Activated naive CD4-positive, alpha-beta T cell treated with anti-CD3 and anti-CD28 coated beads for 36 hours (primary cell): ENCODE measurements at regions of chr19 and their contacts with region 1.

Region 1: GRCh38 chr19:38079926-38080380 is 144.1 kb downstream of the DPF1 start:
- DNase-seq: peak; percentile 13
- H3K4me3 Mint-ChIP-seq: no peak overlapping the region
- H3K27ac Mint-ChIP-seq: peak overlapping the region; percentile 83
- H3K4me1 Mint-ChIP-seq: peaks cover 21% of the 10 kb centered on the region
- H3K27me3 Mint-ChIP-seq: no peaks in the 10 kb centered on the region

Region 2: DNA sequence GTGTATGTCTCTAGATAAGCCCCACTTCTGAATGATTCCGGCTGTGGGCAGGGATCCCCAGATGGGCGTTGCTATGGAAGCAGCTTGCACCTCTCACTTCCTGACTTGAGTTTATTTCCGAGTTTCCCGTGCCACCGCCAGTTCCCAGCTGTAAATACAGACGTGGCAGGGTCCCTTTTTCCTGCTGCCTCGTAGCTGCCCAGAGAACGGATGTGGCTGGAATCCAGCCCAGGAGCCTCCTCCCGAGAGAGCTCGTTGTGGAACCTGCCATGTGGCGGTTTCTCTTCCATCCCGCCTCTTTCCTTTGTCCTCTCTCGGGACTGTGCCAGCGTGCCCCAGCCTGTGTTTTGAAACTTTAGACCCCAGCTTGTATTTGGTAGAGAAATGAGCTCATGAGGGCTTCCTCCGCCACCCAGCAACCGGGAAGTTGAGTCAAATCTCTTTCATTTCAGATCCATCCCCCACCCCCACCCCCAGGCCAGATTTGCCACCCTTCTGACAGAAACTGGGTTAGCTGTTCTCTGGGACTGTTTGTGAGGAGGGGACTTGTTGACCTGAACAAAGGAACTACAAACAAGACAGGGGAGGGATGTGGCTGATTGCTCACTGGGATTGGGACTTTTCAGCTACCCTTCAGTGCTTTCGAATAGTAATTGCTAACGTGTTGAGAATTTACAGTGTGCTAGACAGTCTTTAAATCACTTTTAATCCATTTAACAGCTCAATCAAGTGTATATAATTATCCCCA is 76.3 kb before region 1 on chr19:
- CTCF ChIA-PET with region 1: interaction called, 4 read pairs
- intact Hi-C with region 1: loop called (anchors 1 kb)
- DNase-seq: peak; percentile 75
- H3K4me3 Mint-ChIP-seq: no peak overlapping the region
- H3K27ac Mint-ChIP-seq: no peak overlapping the region
- H3K4me1 Mint-ChIP-seq: peaks cover 14% of the 10 kb centered on the region
- H3K27me3 Mint-ChIP-seq: no peaks in the 10 kb centered on the region

Region 3: GRCh38 chr19:38049105-38049649 is 30.8 kb before region 1 on chr19:
- CTCF ChIA-PET with region 1: interaction called, 4 read pairs
- intact Hi-C with region 1: loop called (anchors 1 kb)
- DNase-seq: peak; percentile 67
- H3K4me3 Mint-ChIP-seq: peak overlapping the region; percentile 73
- H3K27ac Mint-ChIP-seq: peak overlapping the region; percentile 96
- H3K4me1 Mint-ChIP-seq: peaks cover 43% of the 10 kb centered on the region
- H3K27me3 Mint-ChIP-seq: no peaks in the 10 kb centered on the region

Region 4: GRCh38 chr19:38057959-38058710 is 21.8 kb before region 1 on chr19:
- CTCF ChIA-PET with region 1: interaction called, 5 read pairs
- intact Hi-C with region 1: loop called (anchors 1 kb)
- DNase-seq: no peak
- H3K4me3 Mint-ChIP-seq: no peak overlapping the region
- H3K27ac Mint-ChIP-seq: peak overlapping the region; percentile 46
- H3K4me1 Mint-ChIP-seq: peaks cover 24% of the 10 kb centered on the region
- H3K27me3 Mint-ChIP-seq: no peaks in the 10 kb centered on the region

Region 5: DNA sequence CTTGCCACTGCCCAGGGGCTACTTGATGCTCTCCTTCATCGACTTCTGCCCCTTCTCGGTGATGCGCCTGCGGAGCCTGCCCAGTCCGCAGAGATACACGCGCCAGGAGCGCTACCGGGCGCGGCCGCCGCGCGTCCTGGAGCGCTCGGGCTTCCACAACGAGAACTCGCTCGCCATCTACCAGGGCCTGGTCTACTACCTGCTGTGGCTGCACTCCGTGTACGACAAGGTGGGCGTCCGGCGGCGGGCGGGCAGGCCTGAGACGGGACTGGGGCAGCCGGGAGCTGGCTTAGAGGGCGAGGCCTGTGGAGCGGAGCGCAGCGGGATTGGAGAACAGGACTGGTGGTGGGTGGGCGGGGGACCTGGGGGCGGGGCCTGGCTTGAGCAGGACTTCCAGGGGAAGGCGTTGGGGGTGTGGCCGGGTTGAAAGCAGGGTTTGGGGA is 281.7 kb after region 1 on chr19:
- CTCF ChIA-PET with region 1: interaction called, 3 read pairs
- intact Hi-C with region 1: loop called (anchors 1 kb)
- DNase-seq: peak; percentile 66
- H3K4me3 Mint-ChIP-seq: peak overlapping the region; percentile 78
- H3K27ac Mint-ChIP-seq: no peak overlapping the region
- H3K4me1 Mint-ChIP-seq: peaks cover 10% of the 10 kb centered on the region
- H3K27me3 Mint-ChIP-seq: peaks cover 31% of the 10 kb centered on the region

Region 6: GRCh38 chr19:38647368-38647965 is 567.5 kb after region 1 on chr19 and contains the start of gene ACTN4:
- CTCF ChIA-PET with region 1: no interaction called
- intact Hi-C with region 1: no loop called
- DNase-seq: peak; percentile 99
- H3K4me3 Mint-ChIP-seq: peak within 1 kb of the TSS; percentile 96
- H3K27ac Mint-ChIP-seq: peak within 1 kb of the TSS; percentile 30
- H3K4me1 Mint-ChIP-seq: peaks cover 30% of the 10 kb centered on the region
- H3K27me3 Mint-ChIP-seq: peaks cover 29% of the 10 kb centered on the region
- total RNA-seq, gene ACTN4: 117 to 119 TPM